PC-9 (cell line): ENCODE measurements at regions of chr12 and their contacts with region 1.

Region 1: DNA sequence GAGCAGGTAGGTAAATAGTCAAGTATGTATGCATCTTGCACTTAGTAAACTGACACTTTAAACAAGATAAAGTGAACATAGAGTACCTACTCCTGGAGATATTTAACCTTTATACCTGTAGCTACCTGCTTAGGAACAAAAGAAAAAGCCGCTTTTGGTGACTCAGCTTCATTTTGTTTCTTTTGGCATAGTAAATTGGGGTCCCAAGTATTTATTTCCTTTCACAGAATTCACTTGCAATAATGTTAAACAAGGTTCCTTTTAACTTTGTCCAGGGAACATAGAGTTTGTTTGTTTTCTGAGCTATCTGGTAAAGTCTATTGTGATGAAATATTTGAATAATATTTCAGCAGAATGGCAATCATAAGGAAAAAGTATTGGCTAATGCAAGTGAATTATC is 20.0 kb downstream of the SLCO1B3 start:
- DNase-seq: peak in 1 of 2 experiments; percentile 38
- H3K4me3 ChIP-seq: no peak overlapping the region
- H3K27ac ChIP-seq: peak overlapping the region; percentile 73
- H3K4me1 ChIP-seq: peaks cover 11% of the 10 kb centered on the region
- H3K27me3 ChIP-seq: no peaks in the 10 kb centered on the region
- CTCF ChIP-seq: no peak

Region 2: DNA sequence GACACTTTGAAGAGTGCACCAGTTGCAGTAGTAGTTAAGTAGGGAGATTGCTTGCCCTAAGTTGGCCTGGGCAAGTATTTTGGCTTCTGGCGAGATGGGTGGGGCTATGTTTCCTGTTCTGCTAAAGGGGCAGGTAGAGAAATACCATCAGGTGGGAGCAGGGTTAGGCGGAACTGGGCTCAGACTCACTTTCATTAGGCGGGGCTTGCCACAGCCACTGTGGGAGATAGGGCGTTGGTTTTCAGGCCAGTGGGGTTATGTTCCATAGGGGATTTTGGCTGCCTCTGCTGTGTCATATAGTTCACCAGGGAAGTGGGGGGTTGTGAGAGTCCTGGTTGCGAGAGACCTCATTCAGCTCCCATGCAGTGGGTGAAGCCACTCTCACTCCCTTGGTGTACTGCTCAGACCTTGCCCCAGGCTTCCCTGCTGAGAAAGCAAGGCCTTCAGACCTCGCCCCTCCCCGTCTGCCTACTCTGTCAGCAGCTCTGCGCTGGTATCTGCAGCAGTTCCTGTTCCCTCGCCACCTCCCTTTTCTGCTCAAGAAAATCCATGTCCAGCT is 1347.8 kb before region 1 on chr12:
- CTCF ChIA-PET with region 1: no interaction called
- POLR2A ChIA-PET with region 1: no interaction called
- intact Hi-C with region 1: no loop called
- DNase-seq: no peak
- H3K4me3 ChIP-seq: no peak overlapping the region
- H3K27ac ChIP-seq: no peak overlapping the region
- H3K4me1 ChIP-seq: no peaks in the 10 kb centered on the region
- H3K27me3 ChIP-seq: no peaks in the 10 kb centered on the region
- CTCF ChIP-seq: no peak

Region 3: GRCh38 chr12:19507823-19508222 is 1322.6 kb before region 1 on chr12:
- CTCF ChIA-PET with region 1: no interaction called
- POLR2A ChIA-PET with region 1: interaction called, 14 read pairs
- intact Hi-C with region 1: no loop called
- DNase-seq: no peak
- H3K4me3 ChIP-seq: no peak overlapping the region
- H3K27ac ChIP-seq: no peak overlapping the region
- H3K4me1 ChIP-seq: no peaks in the 10 kb centered on the region
- H3K27me3 ChIP-seq: no peaks in the 10 kb centered on the region
- CTCF ChIP-seq: no peak

Region 4: GRCh38 chr12:20624718-20625117 is 205.7 kb before region 1 on chr12:
- CTCF ChIA-PET with region 1: no interaction called
- POLR2A ChIA-PET with region 1: no interaction called
- intact Hi-C with region 1: no loop called
- DNase-seq: no peak
- H3K4me3 ChIP-seq: no peak overlapping the region
- H3K27ac ChIP-seq: no peak overlapping the region
- H3K4me1 ChIP-seq: 0 out of 2 replicates have a peak, but pooled peaks cover 5% of the 10 kb centered on the region
- H3K27me3 ChIP-seq: no peaks in the 10 kb centered on the region
- CTCF ChIP-seq: no peak